ENCODE measurements at regions of chr12 and their contacts with region 1.

Region 1: DNA sequence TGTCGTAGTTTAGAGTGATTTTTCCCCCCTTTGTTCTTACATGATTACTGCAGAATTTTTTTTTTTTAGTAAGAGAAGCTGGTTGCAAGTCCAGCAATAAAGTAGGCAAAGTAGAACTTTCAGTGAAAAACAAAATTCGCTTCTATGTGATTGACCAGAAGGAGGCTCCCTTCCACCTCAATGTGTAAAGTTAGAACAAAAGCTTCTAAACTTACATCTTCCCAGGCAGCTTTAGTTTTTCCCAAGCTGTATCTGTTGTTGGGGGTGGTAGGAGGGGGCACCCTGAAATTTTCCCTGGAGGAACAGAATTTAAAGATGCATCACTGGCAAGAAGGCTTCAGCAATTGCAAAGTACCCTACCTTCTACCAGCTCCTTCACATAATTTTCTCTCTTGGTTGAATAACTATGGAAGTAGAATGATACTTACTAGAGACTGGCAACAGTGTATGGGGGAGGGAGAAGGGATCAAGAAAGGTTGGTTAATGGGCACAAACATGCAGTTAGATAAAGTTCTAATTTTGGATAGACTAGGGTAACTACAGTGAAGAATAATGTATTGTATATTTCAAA is 87.3 kb upstream of the E2F7 start:
- DNase-seq: no peak
- ATAC-seq: peak in 1 of 2 donors; percentile 30

Region 2: DNA sequence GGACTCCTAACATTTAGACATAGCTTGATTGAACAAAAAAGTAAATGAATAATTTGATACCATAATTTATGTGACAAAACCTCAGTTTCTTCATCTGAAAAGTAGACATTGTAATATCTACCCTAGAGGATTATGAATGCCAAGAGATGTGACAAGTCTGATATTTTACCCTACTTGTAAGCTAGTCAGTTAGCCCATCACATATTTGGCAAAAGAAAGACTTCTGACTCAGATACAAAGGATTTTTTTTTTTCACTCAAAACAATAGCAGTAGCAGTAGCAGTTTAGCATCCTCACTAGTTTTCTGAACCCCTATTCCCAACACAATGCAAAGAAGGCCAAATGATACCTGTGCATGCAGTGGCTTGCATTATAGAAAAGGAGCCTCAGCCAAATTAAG is 289.9 kb after region 1 on chr12:
- intact Hi-C with region 1: no loop called
- DNase-seq: no peak
- ATAC-seq: no peak

Region 3: GRCh38 chr12:77560714-77561113 is 408.0 kb after region 1 on chr12:
- intact Hi-C with region 1: no loop called
- DNase-seq: no peak
- ATAC-seq: no peak

Region 4: GRCh38 chr12:77685112-77685511 is 532.4 kb after region 1 on chr12:
- intact Hi-C with region 1: loop called (anchors 1 to 10 kb)
- DNase-seq: peak; percentile 65
- ATAC-seq: peak; percentile 79 to 85

Region 5: DNA sequence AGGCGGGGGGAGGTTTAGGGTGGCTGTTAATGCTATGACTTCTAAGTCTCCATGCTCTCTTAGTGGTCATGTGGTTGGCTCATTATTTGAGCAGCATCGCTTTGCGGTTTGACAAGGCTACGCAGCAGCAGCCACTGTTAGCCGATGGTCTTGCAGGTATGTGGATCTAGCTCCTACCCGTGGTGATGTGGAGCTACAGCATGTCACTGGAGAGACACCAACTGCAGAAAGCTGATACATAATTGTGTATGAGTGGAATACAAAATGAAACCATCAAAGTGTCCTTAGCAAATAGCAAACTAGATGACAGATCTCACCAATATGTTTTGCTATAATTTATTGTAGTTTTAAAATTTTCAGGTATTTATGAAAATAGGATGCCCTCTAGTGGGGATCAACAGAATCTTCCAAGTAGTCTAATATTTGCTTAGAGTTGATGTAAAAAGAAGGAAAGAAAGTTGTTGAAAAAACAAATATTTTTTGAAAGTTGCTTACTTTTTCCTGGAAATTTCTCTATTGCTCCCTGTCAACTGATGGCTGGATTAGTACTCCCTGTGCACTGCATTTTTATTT is 772.9 kb after region 1 on chr12:
- intact Hi-C with region 1: loop called in 1 of 2 experiments (anchors 10 kb)
- DNase-seq: peak; percentile 69
- ATAC-seq: peak; percentile 95

Measured in left cardiac atrium (tissue), 4 donors.